ENCODE measurements at regions of chr12 and their contacts with region 1.

Region 1: GRCh38 chr12:53625946-53626701 is at the start of gene ATF7:
- DNase-seq: peak; percentile 99
- total RNA-seq, gene ATF7: 11.6 and 12.4 TPM in 2 replicates

Region 2: GRCh38 chr12:53675651-53676453 is 49.7 kb after region 1 on chr12 and contains the start of gene ATP5MC2:
- in situ Hi-C with region 1: loop called (anchors 10 kb)
- DNase-seq: peak; percentile 99
- total RNA-seq, gene ATP5MC2: 219 and 225 TPM in 2 replicates